GM10248 (cell line): ENCODE measurements at regions of chr13 and their contacts with region 1.

Region 1: DNA sequence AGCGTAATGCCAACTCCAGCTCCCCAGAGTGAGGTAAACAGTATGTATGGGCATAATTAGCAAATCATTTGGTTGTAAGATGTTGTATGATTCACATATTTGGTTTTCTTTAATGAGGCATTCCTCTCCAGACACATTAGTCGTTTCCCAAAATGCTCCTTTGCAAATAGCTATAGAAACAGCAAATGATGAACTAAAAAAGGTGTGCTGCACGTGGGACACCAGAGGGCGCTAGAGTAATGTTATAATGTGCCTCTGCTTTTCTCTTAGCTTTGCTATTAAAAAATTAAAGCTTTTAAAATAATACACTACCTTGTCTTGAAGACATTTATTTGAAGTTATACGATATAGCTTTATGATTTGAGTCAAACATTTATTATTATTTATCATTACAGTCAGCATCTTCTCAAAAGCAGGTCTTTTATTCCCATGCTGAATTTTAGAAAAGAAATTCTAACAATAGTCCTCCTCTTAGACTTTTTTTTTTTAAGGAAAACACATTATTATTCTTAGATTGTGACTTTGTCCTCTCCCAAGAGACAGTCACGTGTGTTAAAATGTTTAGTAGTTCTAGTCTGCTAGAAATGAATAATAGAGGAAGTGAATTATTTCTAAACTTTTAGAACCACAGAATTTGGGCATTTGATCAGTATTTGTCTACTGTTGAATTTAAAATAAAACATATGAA is 121.6 kb upstream of the FRY start:
- DNase-seq: peak; percentile 30
- CTCF ChIP-seq: peak; percentile 87

Region 2: GRCh38 chr13:31896427-31896826 is 13.6 kb before region 1 on chr13:
- CTCF ChIA-PET with region 1: interaction called, 60 read pairs
- POLR2A ChIA-PET with region 1: no interaction called
- DNase-seq: peak; percentile 25
- CTCF ChIP-seq: no peak

Region 3: GRCh38 chr13:31930901-31931522 is 21.0 kb after region 1 on chr13:
- CTCF ChIA-PET with region 1: interaction called, 13 read pairs
- POLR2A ChIA-PET with region 1: no interaction called
- DNase-seq: peak; percentile 66
- CTCF ChIP-seq: no peak

Region 4: DNA sequence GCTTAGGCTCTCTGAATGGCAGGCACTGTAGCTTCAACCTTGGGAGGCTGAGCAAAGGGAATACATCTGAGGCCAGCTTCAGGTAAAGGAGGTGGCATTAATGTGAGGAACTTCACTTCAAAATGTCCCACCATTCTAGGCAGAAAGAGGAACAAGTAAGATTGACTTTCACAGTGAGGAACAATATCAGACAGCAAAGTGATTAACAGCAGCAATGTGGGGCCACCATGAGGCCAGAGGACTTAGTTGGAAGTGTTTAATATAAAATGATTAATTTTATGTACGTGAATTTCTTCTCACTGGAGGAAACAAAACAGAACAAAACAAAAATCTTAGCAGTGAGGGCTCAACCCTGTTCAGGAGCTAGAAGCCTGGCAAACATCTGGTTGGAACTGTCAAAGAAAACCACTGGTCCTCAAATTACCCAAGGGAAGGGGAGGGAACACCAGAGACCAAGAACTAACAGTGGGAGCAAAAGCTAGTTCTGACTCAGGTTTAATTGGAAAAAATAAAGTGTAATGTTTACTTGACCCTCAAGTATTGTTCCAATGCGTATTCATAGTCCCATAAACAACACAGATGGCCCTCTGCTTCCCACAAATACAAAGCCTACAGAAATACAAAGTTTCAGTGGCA is 77.6 kb after region 1 on chr13:
- CTCF ChIA-PET with region 1: interaction called, 21 read pairs
- POLR2A ChIA-PET with region 1: no interaction called
- DNase-seq: peak; percentile 23
- CTCF ChIP-seq: peak; percentile 20

Region 5: GRCh38 chr13:32305646-32306045 is 395.6 kb after region 1 on chr13:
- CTCF ChIA-PET with region 1: interaction called, 23 read pairs
- POLR2A ChIA-PET with region 1: no interaction called
- DNase-seq: no peak
- CTCF ChIP-seq: no peak

Region 6: DNA sequence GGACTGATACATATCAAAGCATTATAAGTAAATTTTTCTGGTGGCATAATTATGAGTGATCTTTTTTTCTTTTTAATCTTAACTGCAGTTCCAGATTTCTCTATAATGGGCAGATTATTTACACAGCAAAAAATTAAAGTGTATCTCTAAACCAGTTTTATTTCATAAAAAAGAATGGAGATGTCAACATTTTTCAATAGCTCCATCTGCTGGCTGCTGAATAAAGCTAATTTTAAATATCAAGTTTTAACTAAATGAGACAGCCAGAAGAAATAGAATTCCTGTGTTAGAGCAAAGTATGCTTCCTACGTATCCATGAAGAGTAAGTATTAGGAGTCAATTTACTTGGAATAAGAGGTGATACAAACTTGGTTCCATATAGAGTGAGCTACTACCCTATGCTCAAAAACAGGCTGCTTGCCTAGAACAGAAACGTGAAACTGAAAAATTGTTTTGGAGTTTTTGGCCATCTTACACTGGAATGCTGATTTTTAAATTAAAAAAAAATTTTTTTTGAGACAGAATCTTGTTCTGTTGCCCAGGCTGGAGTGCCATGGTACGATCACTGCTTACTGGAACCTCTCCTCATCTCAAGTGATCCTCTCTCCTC is 671.3 kb after region 1 on chr13:
- CTCF ChIA-PET with region 1: interaction called, 21 read pairs
- POLR2A ChIA-PET with region 1: no interaction called
- DNase-seq: peak; percentile 29
- CTCF ChIP-seq: peak; percentile 37